ENCODE measurements at regions of chr20 and their contacts with region 1.

Region 1: DNA sequence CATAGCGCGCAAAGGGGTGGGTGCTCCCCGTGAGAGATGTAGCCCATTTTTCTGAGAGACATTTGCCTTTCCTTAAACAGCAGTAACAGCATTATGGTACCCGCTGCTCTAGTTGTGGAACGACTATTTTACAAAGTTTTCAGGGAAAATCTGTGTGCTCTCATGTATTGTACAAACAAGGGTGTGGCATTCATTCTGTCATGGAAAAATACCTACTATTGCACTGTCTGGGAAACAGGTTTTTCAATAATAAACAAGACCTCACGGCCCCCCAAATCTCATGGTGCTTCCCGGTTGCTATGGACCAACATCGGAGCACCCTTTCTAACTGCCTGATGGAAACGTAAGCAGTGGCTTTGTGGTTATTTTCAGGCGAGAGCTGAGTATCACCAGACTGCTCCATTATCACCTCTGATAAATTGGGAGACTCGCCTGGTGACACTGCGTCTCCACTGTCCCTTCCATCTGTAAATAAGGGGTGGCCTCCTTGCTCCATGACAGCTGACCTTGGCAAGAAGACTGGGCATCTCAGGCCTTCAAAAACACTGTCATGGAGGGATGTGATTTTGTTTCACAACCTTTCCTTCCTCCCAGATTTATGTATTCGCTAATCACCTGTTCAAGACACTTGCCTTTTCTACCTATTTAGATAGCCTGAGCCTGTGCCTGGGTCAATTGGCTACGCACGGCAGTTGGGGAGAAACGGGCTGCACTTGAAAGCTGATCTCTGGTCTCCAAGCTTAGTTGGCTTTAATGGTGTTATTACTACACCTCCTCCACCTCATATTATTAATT is 17.9 kb upstream of the CDH4 start:
- DNase-seq: no peak
- H3K27ac ChIP-seq: no peak overlapping the region
- CTCF ChIP-seq: no peak

Region 2: GRCh38 chr20:61219021-61219431 is 15.2 kb before region 1 on chr20:
- CTCF ChIA-PET with region 1: interaction called, 12 read pairs
- POLR2A ChIA-PET with region 1: no interaction called
- DNase-seq: no peak
- H3K27ac ChIP-seq: no peak overlapping the region
- CTCF ChIP-seq: no peak

Region 3: GRCh38 chr20:61253264-61253639 is 19.0 kb after region 1 on chr20:
- CTCF ChIA-PET with region 1: interaction called, 14 read pairs
- POLR2A ChIA-PET with region 1: no interaction called
- DNase-seq: peak; percentile 71
- H3K27ac ChIP-seq: peak overlapping the region; percentile 45; the same call in 1 of the 2 replicates
- CTCF ChIP-seq: peak; percentile 68

Region 4: DNA sequence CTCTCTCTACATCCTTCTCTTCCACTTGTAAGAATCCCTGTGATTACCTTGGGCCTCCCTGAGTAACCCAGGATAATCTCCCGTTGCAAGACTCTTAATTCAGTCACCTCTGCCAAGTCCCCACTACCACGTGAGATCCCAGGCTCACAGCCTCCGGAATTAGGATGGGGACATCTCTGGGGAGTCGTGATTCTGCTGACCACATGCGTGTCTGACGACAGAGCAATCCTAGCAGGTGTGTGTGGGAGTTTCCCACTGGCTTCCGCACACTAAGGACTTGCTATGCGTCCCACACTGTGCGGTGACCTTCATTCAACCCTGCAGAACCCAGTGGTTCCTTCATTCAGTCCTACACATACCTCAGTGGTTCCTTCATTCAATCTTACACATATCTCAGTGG is 29.7 kb after region 1 on chr20:
- CTCF ChIA-PET with region 1: no interaction called
- POLR2A ChIA-PET with region 1: no interaction called
- DNase-seq: no peak
- H3K27ac ChIP-seq: no peak overlapping the region
- CTCF ChIP-seq: no peak